PC-3 (cell line): ENCODE measurements at regions of chr3 and their contacts with region 1.

Region 1: GRCh38 chr3:141441381-141442364 is 45.2 kb upstream of the RASA2 start:
- DNase-seq: peak; percentile 77
- ATAC-seq: peak; percentile 77
- H3K4me3 ChIP-seq: no peak overlapping the region
- H3K27ac ChIP-seq: no peak overlapping the region
- H3K4me1 ChIP-seq: no peaks in the 10 kb centered on the region; the same call in 1 of the 2 replicates
- H3K27me3 ChIP-seq: no peaks in the 10 kb centered on the region
- CTCF ChIP-seq: peak; percentile 85

Region 2: GRCh38 chr3:141360888-141361598 is 80.6 kb before region 1 on chr3:
- CTCF ChIA-PET with region 1: interaction called, 8 read pairs
- POLR2A ChIA-PET with region 1: no interaction called
- intact Hi-C with region 1: loop called (anchors 1 kb)
- DNase-seq: peak; percentile 78
- ATAC-seq: peak; percentile 81
- H3K4me3 ChIP-seq: peak overlapping the region; percentile 39; the same call in 1 of the 2 replicates
- H3K27ac ChIP-seq: peak overlapping the region; percentile 42
- H3K4me1 ChIP-seq: peaks cover 12% of the 10 kb centered on the region
- H3K27me3 ChIP-seq: no peaks in the 10 kb centered on the region
- CTCF ChIP-seq: peak; percentile 85

Region 3: GRCh38 chr3:141402476-141403171 is 39.0 kb before region 1 on chr3:
- CTCF ChIA-PET with region 1: no interaction called
- POLR2A ChIA-PET with region 1: no interaction called
- intact Hi-C with region 1: loop called (anchors 5 kb)
- DNase-seq: peak; percentile 29
- ATAC-seq: peak; percentile 65
- H3K4me3 ChIP-seq: peak overlapping the region; percentile 69
- H3K27ac ChIP-seq: peak overlapping the region; percentile 58; the same call in 1 of the 2 replicates
- H3K4me1 ChIP-seq: peaks cover 27% of the 10 kb centered on the region
- H3K27me3 ChIP-seq: no peaks in the 10 kb centered on the region
- CTCF ChIP-seq: no peak